IMR-90 (cell line): ENCODE measurements at regions of chr17 and their contacts with region 1.

Region 1: DNA sequence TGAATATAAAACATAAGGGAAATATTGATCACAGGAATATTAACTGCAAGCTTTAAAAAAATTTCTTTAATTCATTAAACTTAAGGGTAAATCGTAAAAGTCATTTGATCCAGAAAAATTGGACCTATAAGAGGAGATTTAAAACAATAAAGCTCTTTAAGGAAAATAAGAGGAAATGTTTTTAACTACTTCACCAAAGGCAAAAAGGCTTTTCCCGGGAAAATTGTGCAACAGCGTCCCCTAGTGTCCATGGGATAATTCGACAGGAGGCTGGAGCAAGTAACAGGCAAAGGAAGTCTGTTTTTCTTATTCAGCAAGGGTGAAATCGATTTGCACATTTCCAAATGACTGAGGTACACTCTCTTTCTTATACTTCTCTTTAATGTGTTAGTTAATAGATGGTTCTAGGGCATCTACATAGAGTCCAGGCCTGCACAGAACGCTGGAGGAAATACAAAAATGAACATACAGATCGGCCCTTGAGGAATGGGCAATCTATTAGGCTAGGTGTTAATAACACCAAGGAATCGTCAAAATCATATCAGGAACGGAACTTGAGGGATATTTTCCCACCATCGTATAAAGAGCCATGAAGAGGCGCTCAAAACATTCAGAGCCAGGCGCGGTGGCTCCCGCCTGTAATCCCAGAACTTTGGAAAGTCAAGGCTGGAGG is 61.4 kb downstream of the ZNF18 start:
- DNase-seq: peak; percentile 33
- ATAC-seq: no peak
- H3K4me3 ChIP-seq: no peak overlapping the region
- H3K27ac ChIP-seq: no peak overlapping the region
- H3K4me1 ChIP-seq: no peaks in the 10 kb centered on the region
- H3K27me3 ChIP-seq: no peaks in the 10 kb centered on the region
- CTCF ChIP-seq: peak; percentile 61
- POLR2A ChIP-seq: no peak
- RAD21 ChIP-seq: peak; percentile 51

Region 2: GRCh38 chr17:10631048-10631700 is 1304.7 kb before region 1 on chr17:
- CTCF ChIA-PET with region 1: no interaction called
- POLR2A ChIA-PET with region 1: no interaction called
- dilution Hi-C with region 1: no loop called
- in situ Hi-C with region 1: no loop called
- intact Hi-C with region 1: loop called (anchors 5 kb)
- DNase-seq: peak; percentile 10
- ATAC-seq: peak; percentile 86
- H3K4me3 ChIP-seq: no peak overlapping the region
- H3K27ac ChIP-seq: no peak overlapping the region
- H3K4me1 ChIP-seq: no peaks in the 10 kb centered on the region
- H3K27me3 ChIP-seq: no peaks in the 10 kb centered on the region
- CTCF ChIP-seq: peak; percentile 77
- POLR2A ChIP-seq: no peak
- RAD21 ChIP-seq: peak; percentile 60

Region 3: GRCh38 chr17:10875979-10876555 is 1059.8 kb before region 1 on chr17:
- CTCF ChIA-PET with region 1: interaction called, 3 read pairs
- POLR2A ChIA-PET with region 1: no interaction called
- dilution Hi-C with region 1: no loop called
- in situ Hi-C with region 1: no loop called
- intact Hi-C with region 1: loop called (anchors 2 kb)
- DNase-seq: peak; percentile 17
- ATAC-seq: peak; percentile 59
- H3K4me3 ChIP-seq: no peak overlapping the region
- H3K27ac ChIP-seq: no peak overlapping the region
- H3K4me1 ChIP-seq: no peaks in the 10 kb centered on the region
- H3K27me3 ChIP-seq: no peaks in the 10 kb centered on the region
- CTCF ChIP-seq: peak; percentile 48
- POLR2A ChIP-seq: no peak
- RAD21 ChIP-seq: peak; percentile 53

Region 4: GRCh38 chr17:11948789-11949188 is 12.9 kb after region 1 on chr17:
- CTCF ChIA-PET with region 1: interaction called, 13 read pairs
- POLR2A ChIA-PET with region 1: no interaction called
- dilution Hi-C with region 1: no loop called
- in situ Hi-C with region 1: no loop called
- intact Hi-C with region 1: no loop called
- DNase-seq: peak; percentile 86
- ATAC-seq: peak; percentile 98
- H3K4me3 ChIP-seq: peak overlapping the region; percentile 11; the same call in 1 of the 2 replicates
- H3K27ac ChIP-seq: no peak overlapping the region
- H3K4me1 ChIP-seq: no peaks in the 10 kb centered on the region
- H3K27me3 ChIP-seq: no peaks in the 10 kb centered on the region
- CTCF ChIP-seq: no peak
- POLR2A ChIP-seq: no peak
- RAD21 ChIP-seq: no peak

Region 5: DNA sequence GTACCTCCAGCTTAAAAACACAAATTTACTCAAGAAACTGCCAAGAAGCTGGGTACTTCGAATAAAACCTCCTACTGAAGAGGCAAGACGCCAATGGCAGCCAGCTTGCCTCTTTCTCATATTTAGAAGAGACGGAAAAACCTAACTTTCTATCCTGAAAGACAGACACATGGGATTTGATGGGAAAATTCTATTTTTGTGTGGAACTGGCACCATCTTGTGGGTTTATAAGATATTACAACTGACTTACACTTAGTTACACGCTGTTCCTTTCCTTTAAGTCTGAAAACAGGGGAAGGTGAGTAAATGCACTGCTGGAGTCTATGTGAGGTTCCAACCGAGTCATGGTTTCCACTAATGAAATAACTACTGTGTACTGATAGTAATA is 51.1 kb after region 1 on chr17:
- CTCF ChIA-PET with region 1: no interaction called
- POLR2A ChIA-PET with region 1: no interaction called
- dilution Hi-C with region 1: no loop called
- in situ Hi-C with region 1: no loop called
- intact Hi-C with region 1: no loop called
- DNase-seq: peak; percentile 60
- ATAC-seq: peak; percentile 92
- H3K4me3 ChIP-seq: no peak overlapping the region
- H3K27ac ChIP-seq: no peak overlapping the region
- H3K4me1 ChIP-seq: no peaks in the 10 kb centered on the region
- H3K27me3 ChIP-seq: no peaks in the 10 kb centered on the region
- CTCF ChIP-seq: peak; percentile 58
- POLR2A ChIP-seq: no peak
- RAD21 ChIP-seq: peak; percentile 62